ENCODE measurements at regions of chr3 and their contacts with region 1.

Region 1: GRCh38 chr3:155805802-155806618 is at the start of gene C3orf33:
- DNase-seq: peak; percentile 79
- ATAC-seq: peak; percentile 98
- H3K4me3 Mint-ChIP-seq: peak within 1 kb of the TSS; percentile 83
- H3K27ac Mint-ChIP-seq: peak within 1 kb of the TSS; percentile 76
- H3K4me1 Mint-ChIP-seq: peaks cover 8% of the 10 kb centered on the region
- H3K27me3 Mint-ChIP-seq: peaks cover 9% of the 10 kb centered on the region
- total RNA-seq, gene C3orf33: 1.1 to 1.3 TPM

Region 2: DNA sequence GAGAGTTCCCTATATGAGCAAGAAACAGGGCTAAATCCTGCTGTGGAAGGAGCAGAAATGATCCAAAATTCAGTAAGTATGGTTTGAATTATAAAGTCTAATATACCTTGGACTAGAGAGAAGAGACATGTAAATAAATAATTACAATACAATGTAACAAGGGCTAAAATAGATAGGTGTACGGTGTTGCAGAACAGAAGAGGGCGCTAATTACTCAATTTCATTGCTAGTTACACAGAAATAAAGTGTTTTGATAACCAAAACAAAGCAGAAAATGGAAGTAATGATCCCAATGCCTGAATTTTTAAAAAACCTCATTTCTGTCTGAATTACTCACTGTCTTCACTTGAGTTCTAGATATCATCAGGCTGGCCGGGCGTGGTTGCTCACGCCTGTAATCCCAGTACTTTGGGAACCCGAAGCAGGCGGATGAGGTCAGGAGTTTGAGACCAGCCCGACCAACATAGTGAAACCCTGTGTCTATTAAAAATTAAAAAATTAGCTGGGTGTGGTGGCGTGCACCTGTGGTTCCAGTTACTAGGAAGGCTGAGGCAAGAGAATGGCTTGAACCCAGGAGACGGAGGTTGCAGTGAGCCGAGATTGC is 52.9 kb before region 1 on chr3:
- CTCF ChIA-PET with region 1: interaction called, 11 read pairs
- DNase-seq: no peak
- ATAC-seq: no peak
- H3K4me3 Mint-ChIP-seq: no peak overlapping the region
- H3K27ac Mint-ChIP-seq: no peak overlapping the region
- H3K4me1 Mint-ChIP-seq: no peaks in the 10 kb centered on the region
- H3K27me3 Mint-ChIP-seq: peaks cover under 1% of the 10 kb centered on the region

Region 3: GRCh38 chr3:155835341-155836071 is 29.5 kb after region 1 on chr3:
- CTCF ChIA-PET with region 1: interaction called, 11 read pairs
- DNase-seq: no peak
- ATAC-seq: no peak
- H3K4me3 Mint-ChIP-seq: no peak overlapping the region
- H3K27ac Mint-ChIP-seq: no peak overlapping the region
- H3K4me1 Mint-ChIP-seq: peaks cover 8% of the 10 kb centered on the region
- H3K27me3 Mint-ChIP-seq: no peaks in the 10 kb centered on the region

Region 4: DNA sequence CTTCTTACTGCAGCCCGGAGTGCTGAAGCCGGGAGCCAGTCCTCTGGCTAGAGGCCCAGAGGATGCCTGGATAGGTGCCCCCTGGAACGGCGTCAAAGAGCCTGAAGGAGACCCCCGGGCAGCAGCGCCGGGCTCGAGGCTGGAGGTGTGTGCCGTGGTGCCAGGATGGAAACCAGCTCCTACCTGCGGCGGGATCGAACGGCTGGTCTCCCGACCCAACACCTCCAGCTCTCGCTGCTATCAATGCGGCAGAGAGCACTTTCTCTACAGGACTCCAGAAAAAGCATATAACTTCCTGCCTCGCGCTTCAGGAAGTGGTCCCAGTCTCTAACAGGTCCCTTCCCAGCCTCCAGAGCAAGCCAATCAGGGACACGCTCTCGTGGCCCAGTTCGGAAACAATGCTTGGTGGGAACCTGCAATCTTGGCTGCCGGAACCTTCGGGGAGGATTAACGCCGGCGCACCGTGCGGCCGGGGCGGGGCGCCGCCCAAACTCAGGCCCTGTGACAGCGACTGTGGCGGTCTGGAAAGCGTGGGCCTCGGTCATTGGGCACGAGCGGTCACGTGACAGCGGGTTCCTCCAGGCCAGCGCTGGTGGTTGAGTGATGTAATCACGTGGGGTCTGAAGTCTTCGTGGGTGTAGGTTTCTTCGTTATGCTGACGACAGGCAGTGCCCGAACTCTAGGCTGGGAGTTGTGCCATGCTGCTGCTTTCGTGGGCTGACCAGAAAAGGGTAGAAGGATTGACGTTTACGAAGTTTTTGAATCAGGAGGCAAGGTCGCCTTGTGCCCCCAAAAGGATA is 48.3 kb after region 1 on chr3 and contains the start of gene SLC33A1:
- CTCF ChIA-PET with region 1: interaction called, 42 read pairs
- DNase-seq: peak; percentile 99
- ATAC-seq: peak; percentile 93
- H3K4me3 Mint-ChIP-seq: peak within 1 kb of the TSS; percentile 89
- H3K27ac Mint-ChIP-seq: peak within 1 kb of the TSS; percentile 99
- H3K4me1 Mint-ChIP-seq: peaks cover 41% of the 10 kb centered on the region
- H3K27me3 Mint-ChIP-seq: no peaks in the 10 kb centered on the region
- total RNA-seq, gene SLC33A1: 24.1 to 24.4 TPM

Region 5: GRCh38 chr3:155870133-155870944 is 64.3 kb after region 1 on chr3 and contains the start of gene GMPS:
- CTCF ChIA-PET with region 1: interaction called, 51 read pairs
- DNase-seq: peak; percentile 96
- ATAC-seq: peak; percentile 91
- H3K4me3 Mint-ChIP-seq: peak within 1 kb of the TSS; percentile 93
- H3K27ac Mint-ChIP-seq: peak within 1 kb of the TSS; percentile 94
- H3K4me1 Mint-ChIP-seq: peaks cover 30% of the 10 kb centered on the region
- H3K27me3 Mint-ChIP-seq: no peaks in the 10 kb centered on the region
- total RNA-seq, gene GMPS: 96.9 to 104 TPM

Region 6: GRCh38 chr3:155895379-155895900 is 89.4 kb after region 1 on chr3:
- CTCF ChIA-PET with region 1: interaction called, 15 read pairs
- DNase-seq: no peak
- ATAC-seq: no peak
- H3K4me3 Mint-ChIP-seq: no peak overlapping the region
- H3K27ac Mint-ChIP-seq: no peak overlapping the region
- H3K4me1 Mint-ChIP-seq: peaks cover 9% of the 10 kb centered on the region
- H3K27me3 Mint-ChIP-seq: no peaks in the 10 kb centered on the region

Region 7: GRCh38 chr3:156106721-156107373 is 300.8 kb after region 1 on chr3:
- CTCF ChIA-PET with region 1: no interaction called
- DNase-seq: no peak
- ATAC-seq: no peak
- H3K4me3 Mint-ChIP-seq: no peak overlapping the region
- H3K27ac Mint-ChIP-seq: no peak overlapping the region
- H3K4me1 Mint-ChIP-seq: no peaks in the 10 kb centered on the region
- H3K27me3 Mint-ChIP-seq: peaks cover 14% of the 10 kb centered on the region